ENCODE measurements at regions of chr18 and their contacts with region 1.

Region 1: DNA sequence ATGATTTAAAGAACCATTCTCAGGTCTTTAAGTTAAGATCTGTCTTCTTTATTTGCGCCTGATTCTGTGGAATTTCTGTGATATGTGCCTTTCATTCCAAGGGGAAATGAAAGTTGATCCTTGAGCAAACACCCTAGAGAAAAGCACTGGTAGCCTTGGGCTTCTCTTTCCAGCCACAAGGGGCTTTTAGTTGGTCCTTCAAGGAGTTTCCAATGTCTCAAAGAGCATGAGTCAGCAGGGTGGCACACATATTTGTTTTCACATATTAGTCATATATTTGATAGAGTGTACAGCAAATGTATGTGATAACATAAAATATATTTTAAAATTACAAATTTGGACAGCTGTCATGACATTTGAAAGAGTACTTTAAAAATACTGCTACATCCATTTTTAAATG is 339.5 kb downstream of the TXNL1 start:
- DNase-seq: peak; percentile 96
- ATAC-seq: peak; percentile 97
- H3K4me3 ChIP-seq: 0 out of 2 replicates have a peak overlapping the region, but pooled peaks have one; percentile 6
- H3K27ac ChIP-seq: peak overlapping the region; percentile 87
- H3K4me1 ChIP-seq: peaks cover 20% of the 10 kb centered on the region
- H3K27me3 ChIP-seq: no peaks in the 10 kb centered on the region
- CTCF ChIP-seq: peak; percentile 63

Region 2: GRCh38 chr18:55415258-55415871 is 883.6 kb before region 1 on chr18:
- CTCF ChIA-PET with region 1: no interaction called
- POLR2A ChIA-PET with region 1: no interaction called
- intact Hi-C with region 1: loop called (anchors 10 kb)
- DNase-seq: peak; percentile 74
- ATAC-seq: peak; percentile 91
- H3K4me3 ChIP-seq: no peak overlapping the region
- H3K27ac ChIP-seq: no peak overlapping the region
- H3K4me1 ChIP-seq: peaks cover 10% of the 10 kb centered on the region; the same call in 1 of the 2 replicates
- H3K27me3 ChIP-seq: no peaks in the 10 kb centered on the region
- CTCF ChIP-seq: peak; percentile 96

Region 3: DNA sequence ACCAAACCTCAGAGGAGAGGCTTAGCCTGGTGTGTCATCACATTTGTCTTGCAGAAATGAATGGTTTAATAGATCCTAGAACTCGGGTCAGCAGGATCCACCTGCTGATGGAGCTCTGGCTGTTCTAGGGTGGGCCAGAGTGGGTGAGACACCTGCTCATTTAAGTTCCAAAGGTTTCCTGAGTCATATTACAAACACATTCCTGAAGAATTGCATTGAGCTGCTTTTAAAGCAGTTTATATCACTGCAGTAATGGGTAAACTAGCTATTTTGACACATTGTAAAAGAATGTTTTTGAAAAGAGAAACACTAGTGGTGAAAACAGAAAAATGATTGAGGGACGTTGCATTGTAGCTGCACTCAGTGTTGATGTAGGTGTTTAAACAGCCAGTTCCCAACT is 535.6 kb before region 1 on chr18:
- CTCF ChIA-PET with region 1: no interaction called
- POLR2A ChIA-PET with region 1: no interaction called
- intact Hi-C with region 1: loop called (anchors 10 kb)
- DNase-seq: peak; percentile 91
- ATAC-seq: peak; percentile 93
- H3K4me3 ChIP-seq: no peak overlapping the region
- H3K27ac ChIP-seq: peak overlapping the region; percentile 53
- H3K4me1 ChIP-seq: peaks cover 40% of the 10 kb centered on the region
- H3K27me3 ChIP-seq: no peaks in the 10 kb centered on the region
- CTCF ChIP-seq: no peak

Region 4: DNA sequence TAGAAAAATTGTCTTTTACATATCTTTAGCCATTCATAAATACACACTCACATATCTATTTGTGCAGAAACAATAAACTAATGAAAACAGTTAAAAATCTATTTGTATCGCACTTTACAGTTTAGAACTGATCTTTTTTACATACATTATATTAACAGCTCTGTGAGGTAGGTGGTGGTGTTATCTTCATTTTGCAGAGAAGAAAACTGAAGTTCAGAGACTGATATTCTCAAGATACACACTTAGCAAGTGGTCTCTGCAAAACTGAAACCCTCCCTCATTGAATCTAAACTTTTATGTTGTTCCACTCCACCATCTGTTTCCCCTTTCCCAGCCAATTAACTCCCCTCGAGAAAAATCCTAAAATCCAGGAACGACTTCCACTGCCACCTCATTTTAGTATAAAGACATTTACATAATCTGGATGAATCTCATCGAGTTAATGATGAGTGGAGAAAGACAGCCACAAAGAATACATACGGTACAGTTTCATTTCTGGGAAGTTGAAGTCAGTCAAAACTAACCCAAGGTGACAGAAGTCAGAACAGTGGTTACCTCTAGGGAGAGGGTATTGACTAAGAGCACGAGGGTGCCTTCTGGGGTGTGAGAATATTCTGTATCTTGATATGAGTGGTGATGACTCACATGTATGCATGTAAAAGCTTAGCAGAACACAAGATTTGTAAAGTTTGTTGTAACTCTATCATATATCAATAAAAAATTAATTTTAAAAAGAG is 186.8 kb before region 1 on chr18:
- CTCF ChIA-PET with region 1: no interaction called
- POLR2A ChIA-PET with region 1: no interaction called
- intact Hi-C with region 1: loop called (anchors 10 kb)
- DNase-seq: peak; percentile 39
- ATAC-seq: peak; percentile 82
- H3K4me3 ChIP-seq: no peak overlapping the region
- H3K27ac ChIP-seq: no peak overlapping the region
- H3K4me1 ChIP-seq: peaks cover 17% of the 10 kb centered on the region; the same call in 1 of the 2 replicates
- H3K27me3 ChIP-seq: no peaks in the 10 kb centered on the region
- CTCF ChIP-seq: no peak

Region 5: DNA sequence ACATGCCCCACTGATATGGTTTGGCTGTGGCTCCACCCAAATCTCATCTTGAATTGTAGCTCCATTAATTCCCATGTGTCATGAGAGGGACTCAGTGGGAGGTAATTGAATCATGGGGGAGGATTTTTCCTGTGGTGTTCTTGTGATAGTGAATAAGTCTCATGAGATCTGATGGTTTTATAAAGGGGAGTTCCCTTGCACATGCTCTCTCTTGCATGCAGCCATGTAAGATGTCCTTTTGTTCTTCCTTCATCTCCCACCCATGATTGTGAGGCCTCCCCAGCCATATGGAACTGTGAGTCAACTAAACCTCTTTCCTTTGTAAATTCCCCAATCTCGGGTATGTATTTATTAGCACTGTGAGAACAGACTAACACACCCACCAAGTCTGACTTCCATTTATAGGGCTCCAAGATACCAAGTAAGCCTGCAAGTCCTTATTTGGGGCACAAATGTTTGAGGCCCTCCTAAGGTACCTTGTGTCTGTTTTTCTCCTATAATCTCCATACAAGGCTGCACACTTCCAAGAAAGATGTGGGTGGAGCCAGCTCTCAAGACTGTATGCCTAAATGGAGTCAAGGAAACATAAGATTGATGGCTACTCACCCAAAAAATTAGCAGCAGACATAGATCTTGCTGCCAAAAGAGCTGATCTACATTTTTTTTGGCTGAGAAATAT is 25.3 kb before region 1 on chr18:
- CTCF ChIA-PET with region 1: no interaction called
- POLR2A ChIA-PET with region 1: no interaction called
- intact Hi-C with region 1: no loop called
- DNase-seq: peak; percentile 2
- ATAC-seq: no peak
- H3K4me3 ChIP-seq: no peak overlapping the region
- H3K27ac ChIP-seq: no peak overlapping the region
- H3K4me1 ChIP-seq: peaks cover 8% of the 10 kb centered on the region
- H3K27me3 ChIP-seq: no peaks in the 10 kb centered on the region
- CTCF ChIP-seq: no peak

Region 6: GRCh38 chr18:56374007-56374655 is 75.2 kb after region 1 on chr18:
- CTCF ChIA-PET with region 1: no interaction called
- POLR2A ChIA-PET with region 1: no interaction called
- intact Hi-C with region 1: loop called (anchors 5 kb)
- DNase-seq: peak; percentile 60
- ATAC-seq: peak; percentile 97
- H3K4me3 ChIP-seq: peak overlapping the region; percentile 30; the same call in 1 of the 2 replicates
- H3K27ac ChIP-seq: peak overlapping the region; percentile 56
- H3K4me1 ChIP-seq: peaks cover 13% of the 10 kb centered on the region
- H3K27me3 ChIP-seq: no peaks in the 10 kb centered on the region
- CTCF ChIP-seq: no peak

Measured in PC-3 (cell line).